B cell (primary cell): ENCODE measurements at regions of chr11 and their contacts with region 1.

Region 1: DNA sequence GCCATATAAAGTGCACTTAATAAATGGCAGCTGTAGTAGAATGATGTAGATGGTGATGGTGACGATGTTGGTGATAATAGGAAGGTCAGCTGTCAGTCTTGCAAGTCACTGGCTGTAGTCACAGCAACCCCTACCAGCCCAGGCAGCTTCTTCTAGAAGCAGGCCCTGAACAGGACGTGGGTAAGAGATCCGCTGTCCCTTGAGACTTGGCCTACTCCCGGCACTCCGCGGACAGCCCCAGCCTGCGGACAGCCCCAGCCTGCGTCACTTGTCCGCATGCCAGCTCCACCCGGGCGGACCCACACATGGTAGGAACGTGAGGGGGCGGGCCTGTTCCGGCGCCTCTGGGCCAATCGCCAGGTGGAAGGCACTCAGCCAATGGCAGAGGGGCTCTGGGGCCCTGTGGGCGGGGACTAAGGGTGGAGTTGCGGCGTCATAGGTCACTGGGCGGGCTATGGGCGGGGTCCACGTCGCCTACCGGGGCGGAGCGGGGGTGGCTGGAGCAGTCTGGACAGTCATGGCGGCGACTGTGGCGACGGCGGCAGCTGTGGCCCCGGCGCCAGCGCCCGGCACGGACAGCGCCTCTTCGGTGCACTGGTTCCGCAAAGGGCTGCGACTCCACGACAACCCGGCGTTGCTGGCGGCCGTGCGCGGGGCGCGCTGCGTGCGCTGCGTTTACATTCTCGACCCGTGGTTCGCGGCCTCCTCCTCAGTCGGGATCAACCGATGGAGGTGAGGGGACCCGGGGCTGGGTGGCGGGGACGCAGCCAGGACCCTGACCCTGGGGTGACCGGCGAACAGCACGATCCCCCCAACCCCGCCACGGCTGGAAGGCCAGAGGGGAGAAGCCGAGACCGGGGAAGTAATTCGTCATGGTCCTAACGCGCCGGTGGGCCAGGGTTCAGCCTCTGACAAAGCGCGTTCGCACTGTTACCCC is at the start of gene CRY2:
- DNase-seq: peak; percentile 99
- ATAC-seq: peak; percentile 89
- H3K4me3 ChIP-seq: peak within 1 kb of the TSS; percentile 76 to 93 (median 90)
- H3K4me3 Mint-ChIP-seq: peak within 1 kb of the TSS; percentile 87
- H3K27ac ChIP-seq: peak within 1 kb of the TSS; percentile 83 to 93
- H3K27ac Mint-ChIP-seq: peak within 1 kb of the TSS; percentile 95
- H3K4me1 ChIP-seq: peaks cover 32 to 43% of the 10 kb centered on the region in 2 donors
- H3K4me1 Mint-ChIP-seq: peaks cover 64% of the 10 kb centered on the region
- H3K27me3 ChIP-seq: no peaks in the 10 kb centered on the region
- H3K27me3 Mint-ChIP-seq: no peaks in the 10 kb centered on the region
- CTCF ChIP-seq: no peak
- total RNA-seq, gene CRY2: 65.1 and 77.9 TPM in 2 replicates

Region 2: GRCh38 chr11:45771566-45772448 is 75.4 kb before region 1 on chr11:
- CTCF ChIA-PET with region 1: interaction called, 14 read pairs
- POLR2A ChIA-PET with region 1: no interaction called
- intact Hi-C with region 1: loop called (anchors 1 kb)
- DNase-seq: peak; percentile 83
- ATAC-seq: peak; percentile 80
- H3K4me3 ChIP-seq: peak overlapping the region; percentile 35 to 86 (median 63)
- H3K4me3 Mint-ChIP-seq: peak overlapping the region; percentile 90
- H3K27ac ChIP-seq: peak overlapping the region in 1 of 2 donors; percentile 8
- H3K27ac Mint-ChIP-seq: peak overlapping the region; percentile 50
- H3K4me1 ChIP-seq: peaks cover 6 to 16% of the 10 kb centered on the region in 2 donors
- H3K4me1 Mint-ChIP-seq: peaks cover 18% of the 10 kb centered on the region
- H3K27me3 ChIP-seq: no peaks in the 10 kb centered on the region
- H3K27me3 Mint-ChIP-seq: peaks cover 7% of the 10 kb centered on the region
- CTCF ChIP-seq: peak; percentile 77

Region 3: GRCh38 chr11:45834298-45834756 is 12.9 kb before region 1 on chr11:
- CTCF ChIA-PET with region 1: interaction called, 15 read pairs
- POLR2A ChIA-PET with region 1: no interaction called
- intact Hi-C with region 1: no loop called
- DNase-seq: no peak
- ATAC-seq: no peak
- H3K4me3 ChIP-seq: no peak overlapping the region
- H3K4me3 Mint-ChIP-seq: no peak overlapping the region
- H3K27ac ChIP-seq: no peak overlapping the region
- H3K27ac Mint-ChIP-seq: no peak overlapping the region
- H3K4me1 ChIP-seq: no peaks in the 10 kb centered on the region
- H3K4me1 Mint-ChIP-seq: peaks cover 11% of the 10 kb centered on the region
- H3K27me3 ChIP-seq: peaks cover 0 to 15% (median 1%) of the 10 kb centered on the region in 4 experiments
- H3K27me3 Mint-ChIP-seq: peaks cover 13% of the 10 kb centered on the region
- CTCF ChIP-seq: no peak

Region 4: DNA sequence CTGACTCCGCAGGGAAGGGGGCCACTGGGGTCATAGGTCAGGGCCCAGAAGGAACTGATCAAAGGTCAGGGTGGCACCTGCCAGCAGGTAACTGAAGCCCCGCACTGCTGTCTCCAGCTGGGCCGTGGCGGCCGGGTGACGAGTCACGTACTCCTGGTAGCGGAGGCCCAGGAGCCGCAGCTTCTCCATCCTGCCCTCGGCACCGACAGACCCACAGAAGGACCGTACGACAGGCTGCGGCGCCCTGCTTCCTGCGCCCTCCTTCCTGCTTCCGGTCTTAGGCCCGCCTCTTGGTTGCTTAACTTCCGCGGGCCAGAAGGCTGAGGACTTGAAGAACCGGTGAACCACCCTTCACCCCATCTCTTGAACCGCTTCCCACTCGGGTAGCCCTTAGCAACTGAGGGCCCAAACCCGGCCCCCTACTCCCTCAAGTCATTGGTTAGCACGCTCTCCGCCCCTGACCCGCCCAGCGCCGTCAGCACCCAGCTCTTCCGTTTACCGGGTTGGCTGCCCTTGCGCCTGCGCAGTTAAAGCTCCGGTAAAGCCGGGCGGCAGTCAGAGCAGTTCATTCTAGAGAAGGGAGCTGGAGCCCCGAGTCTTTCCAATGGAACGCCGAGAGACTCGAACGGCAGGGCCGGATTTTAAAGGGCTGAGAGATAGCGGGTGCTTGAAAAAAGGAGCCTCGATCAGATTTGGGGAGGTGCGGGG is 70.5 kb after region 1 on chr11 and contains the start of gene PEX16:
- CTCF ChIA-PET with region 1: interaction called, 4 read pairs
- POLR2A ChIA-PET with region 1: interaction called, 5 read pairs
- intact Hi-C with region 1: loop called (anchors 1 kb)
- DNase-seq: peak; percentile 99
- ATAC-seq: peak; percentile 83
- H3K4me3 ChIP-seq: peak within 1 kb of the TSS; percentile 86 to 99 (median 90)
- H3K4me3 Mint-ChIP-seq: peak within 1 kb of the TSS; percentile 92
- H3K27ac ChIP-seq: peak within 1 kb of the TSS; percentile 88 to 95
- H3K27ac Mint-ChIP-seq: peak within 1 kb of the TSS; percentile 94
- H3K4me1 ChIP-seq: peaks cover 44 to 57% of the 10 kb centered on the region in 2 donors
- H3K4me1 Mint-ChIP-seq: peaks cover 64% of the 10 kb centered on the region
- H3K27me3 ChIP-seq: no peaks in the 10 kb centered on the region
- H3K27me3 Mint-ChIP-seq: no peaks in the 10 kb centered on the region
- CTCF ChIP-seq: no peak
- total RNA-seq, gene PEX16: 107 and 113 TPM in 2 replicates

Region 5: DNA sequence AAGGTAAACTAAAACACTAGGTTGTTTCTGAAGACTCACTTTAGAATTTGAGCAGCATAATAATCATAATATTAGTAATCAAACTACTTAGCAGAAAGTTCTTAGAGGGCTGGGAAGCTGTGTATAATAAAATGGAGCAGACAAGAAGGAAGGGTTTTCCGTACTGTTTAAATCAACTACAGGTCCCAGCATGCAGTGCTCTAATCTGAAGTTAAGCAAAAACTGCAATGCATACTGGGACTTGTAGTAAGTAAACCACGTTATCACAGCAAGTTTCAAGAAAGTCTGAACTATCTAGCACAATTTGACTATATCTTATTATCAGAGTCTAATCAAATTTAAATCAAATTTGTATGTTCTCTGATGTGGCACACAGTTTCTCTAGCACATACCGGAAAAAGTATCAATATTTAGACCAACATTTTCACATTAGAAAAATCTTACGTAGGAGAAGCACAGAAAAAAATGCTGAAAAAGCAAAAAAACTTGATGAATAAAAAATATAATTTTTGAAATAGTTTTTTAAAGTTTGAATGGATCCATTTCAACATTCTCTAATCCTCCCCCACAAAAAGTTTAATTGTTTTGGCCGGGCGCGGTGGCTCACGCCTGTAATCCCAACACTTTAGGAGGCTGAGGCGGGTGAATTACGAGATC is 265.8 kb after region 1 on chr11:
- CTCF ChIA-PET with region 1: no interaction called
- POLR2A ChIA-PET with region 1: no interaction called
- intact Hi-C with region 1: loop called (anchors 2 kb)
- DNase-seq: peak; percentile 71
- ATAC-seq: peak; percentile 99
- H3K4me3 ChIP-seq: no peak overlapping the region
- H3K4me3 Mint-ChIP-seq: peak overlapping the region; percentile 23
- H3K27ac ChIP-seq: no peak overlapping the region
- H3K27ac Mint-ChIP-seq: peak overlapping the region; percentile 32
- H3K4me1 ChIP-seq: peaks cover 6 to 25% of the 10 kb centered on the region in 2 donors
- H3K4me1 Mint-ChIP-seq: peaks cover 43% of the 10 kb centered on the region
- H3K27me3 ChIP-seq: no peaks in the 10 kb centered on the region
- H3K27me3 Mint-ChIP-seq: no peaks in the 10 kb centered on the region
- CTCF ChIP-seq: no peak

Region 6: DNA sequence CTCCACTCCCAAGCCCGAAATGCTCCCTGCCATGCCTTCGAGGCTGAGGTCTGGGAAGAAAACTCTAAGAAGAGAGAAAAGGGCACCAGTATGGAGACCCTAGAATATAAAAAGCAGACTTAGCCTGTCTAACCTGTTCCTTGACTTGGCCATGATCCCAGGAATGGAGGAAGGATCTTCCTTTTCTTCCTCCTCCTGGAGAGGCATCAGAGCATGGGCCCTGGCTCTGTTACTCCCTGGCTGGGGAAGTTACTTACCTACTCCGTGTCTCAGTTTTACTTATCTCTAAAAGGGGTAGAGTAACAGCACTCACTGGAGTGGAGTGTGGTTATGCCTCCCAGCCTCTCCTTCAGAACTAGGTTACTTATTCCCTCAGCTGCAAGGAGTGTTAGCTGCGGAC is 329.2 kb after region 1 on chr11:
- CTCF ChIA-PET with region 1: no interaction called
- POLR2A ChIA-PET with region 1: no interaction called
- intact Hi-C with region 1: no loop called
- DNase-seq: no peak
- ATAC-seq: no peak
- H3K4me3 ChIP-seq: no peak overlapping the region
- H3K4me3 Mint-ChIP-seq: no peak overlapping the region
- H3K27ac ChIP-seq: no peak overlapping the region
- H3K27ac Mint-ChIP-seq: no peak overlapping the region
- H3K4me1 ChIP-seq: no peaks in the 10 kb centered on the region
- H3K4me1 Mint-ChIP-seq: no peaks in the 10 kb centered on the region
- H3K27me3 ChIP-seq: peaks cover 0 to 19% (median 0%) of the 10 kb centered on the region in 4 experiments
- H3K27me3 Mint-ChIP-seq: peaks cover 47% of the 10 kb centered on the region
- CTCF ChIP-seq: no peak